Activated T-helper 2 cell treated with anti-CD3 and anti-CD28 coated beads, Interferon-gamma antibody, Interleukin-2, Interleukin-4, amounts not matched to agents 10 μg/mL and 5 μg/mL and 100 μg/mL, durations not matched to agents 14 hours and 24 hours and 36 hours (primary cell): ENCODE measurements at regions of chr19 and their contacts with region 1.

Region 1: DNA sequence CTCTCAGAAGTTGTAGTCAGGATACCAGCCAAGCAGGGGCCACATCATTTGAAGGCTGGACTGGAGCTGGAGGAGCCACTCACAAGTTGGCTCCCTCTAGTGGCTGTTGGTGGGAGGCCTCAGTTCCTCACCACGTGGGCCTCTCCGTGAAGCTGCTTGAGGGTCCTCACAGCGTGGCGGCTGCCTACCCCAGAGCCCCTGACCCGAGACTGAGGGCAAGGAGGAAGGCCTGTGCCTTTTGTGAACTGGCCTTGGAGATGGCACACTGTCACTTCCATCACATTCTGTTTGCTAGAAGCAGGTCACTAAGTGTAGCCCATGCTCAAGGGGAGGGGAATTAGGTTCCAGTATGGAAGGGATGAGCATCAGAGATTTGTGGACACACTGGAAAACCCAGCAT is 14.6 kb downstream of the GNA11 start:
- DNase-seq: peak; percentile 56
- H3K4me3 Mint-ChIP-seq: no peak overlapping the region
- H3K27ac Mint-ChIP-seq: no peak overlapping the region
- H3K4me1 Mint-ChIP-seq: peaks cover 6% of the 10 kb centered on the region
- H3K27me3 Mint-ChIP-seq: no peaks in the 10 kb centered on the region

Region 2: DNA sequence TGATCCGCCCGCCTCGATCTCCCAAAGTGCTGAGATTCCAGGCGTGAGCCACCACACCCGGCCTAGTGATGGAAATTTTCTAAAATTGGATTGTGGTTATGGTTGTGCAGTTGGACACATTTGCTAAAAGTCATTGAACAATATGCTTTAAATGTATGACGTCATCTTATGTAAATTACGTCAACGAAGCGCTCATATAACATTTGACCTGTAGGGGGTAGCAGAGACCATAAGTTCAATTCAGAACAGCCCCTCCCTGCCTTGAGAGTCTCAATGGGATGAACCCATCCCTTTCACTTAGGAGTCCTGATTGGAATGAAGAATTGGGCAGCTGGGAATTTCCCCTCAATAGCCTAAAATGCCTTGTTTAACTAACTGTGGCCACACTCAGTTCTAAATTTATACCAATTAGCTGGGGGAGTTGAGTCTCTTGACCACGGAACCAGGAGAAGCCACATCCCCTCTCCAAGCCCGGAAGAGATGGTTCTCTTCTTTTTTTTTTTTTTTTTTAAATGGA is 146.7 kb before region 1 on chr19:
- intact Hi-C with region 1: loop called (anchors 1 kb)
- DNase-seq: peak; percentile 44
- H3K4me3 Mint-ChIP-seq: no peak overlapping the region
- H3K27ac Mint-ChIP-seq: no peak overlapping the region
- H3K4me1 Mint-ChIP-seq: peaks cover 2% of the 10 kb centered on the region
- H3K27me3 Mint-ChIP-seq: no peaks in the 10 kb centered on the region

Region 3: GRCh38 chr19:3094601-3095437 is 14.0 kb before region 1 on chr19:
- intact Hi-C with region 1: no loop called
- DNase-seq: no peak
- H3K4me3 Mint-ChIP-seq: peak overlapping the region; percentile 69
- H3K27ac Mint-ChIP-seq: no peak overlapping the region
- H3K4me1 Mint-ChIP-seq: peaks cover 18% of the 10 kb centered on the region
- H3K27me3 Mint-ChIP-seq: peaks cover 25% of the 10 kb centered on the region